ENCODE measurements at regions of chr14 and their contacts with region 1.

Region 1: GRCh38 chr14:67359775-67360648 is at the starts of genes ATP6V1D and EIF2S1:
- DNase-seq: peak; percentile 96
- H3K4me3 ChIP-seq: peak within 1 kb of the TSS; percentile 97
- CTCF ChIP-seq: peak; percentile 79

Region 2: DNA sequence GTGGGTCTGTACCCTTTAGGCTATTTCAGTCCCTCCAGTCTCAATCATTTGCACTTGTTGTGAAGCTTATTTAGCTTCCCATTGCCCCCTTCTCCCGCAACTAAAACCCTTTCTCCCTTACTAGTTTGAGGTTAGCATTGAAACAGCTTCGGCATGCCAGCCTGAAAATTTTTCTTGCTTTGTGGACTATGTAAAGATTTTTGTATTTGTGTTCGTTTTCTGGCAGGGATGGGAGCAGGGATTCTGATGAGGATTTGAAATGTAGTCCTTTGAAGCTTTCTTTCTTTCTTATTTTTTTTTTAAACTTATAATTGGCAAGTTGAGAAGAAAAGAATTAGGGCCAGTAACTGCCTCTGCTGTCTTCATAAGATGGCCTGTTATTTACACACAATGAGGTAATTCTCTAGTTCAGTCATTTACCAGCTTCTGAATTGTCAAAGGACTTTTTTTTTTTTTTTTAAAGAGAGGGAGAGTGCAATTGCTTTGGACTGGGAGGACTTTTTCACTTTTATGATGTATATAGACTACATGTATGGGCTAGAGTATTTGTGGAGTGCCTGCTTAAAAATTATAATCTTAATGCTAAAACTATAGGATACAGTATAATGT is 89.8 kb before region 1 on chr14:
- CTCF ChIA-PET with region 1: no interaction called
- POLR2A ChIA-PET with region 1: no interaction called
- DNase-seq: no peak
- H3K4me3 ChIP-seq: no peak overlapping the region
- CTCF ChIP-seq: no peak

Region 3: GRCh38 chr14:67285876-67286452 is 74.0 kb before region 1 on chr14:
- CTCF ChIA-PET with region 1: interaction called, 10 read pairs
- POLR2A ChIA-PET with region 1: no interaction called
- DNase-seq: no peak
- H3K4me3 ChIP-seq: no peak overlapping the region
- CTCF ChIP-seq: no peak

Region 4: DNA sequence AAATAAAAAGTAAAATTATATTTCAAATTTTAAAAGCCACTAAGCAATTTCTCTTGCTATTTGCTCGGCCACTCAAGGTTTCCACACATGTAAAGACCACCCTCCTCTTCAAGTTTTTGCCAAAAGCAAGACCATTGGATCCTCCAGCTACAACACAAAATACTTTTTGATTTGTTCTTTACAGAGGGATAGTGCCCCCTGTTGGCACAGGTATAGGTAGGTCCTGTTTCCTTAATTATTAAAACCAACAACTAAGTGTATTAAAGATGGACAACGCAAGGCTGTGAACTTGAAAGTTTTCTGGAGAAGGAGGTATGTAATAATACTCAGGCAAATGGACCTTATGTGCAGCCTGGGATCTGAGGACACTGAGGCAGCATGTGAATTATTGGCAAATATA is 24.2 kb before region 1 on chr14:
- CTCF ChIA-PET with region 1: interaction called, 13 read pairs
- POLR2A ChIA-PET with region 1: interaction called, 4 read pairs
- DNase-seq: no peak
- H3K4me3 ChIP-seq: no peak overlapping the region
- CTCF ChIP-seq: no peak

Region 5: DNA sequence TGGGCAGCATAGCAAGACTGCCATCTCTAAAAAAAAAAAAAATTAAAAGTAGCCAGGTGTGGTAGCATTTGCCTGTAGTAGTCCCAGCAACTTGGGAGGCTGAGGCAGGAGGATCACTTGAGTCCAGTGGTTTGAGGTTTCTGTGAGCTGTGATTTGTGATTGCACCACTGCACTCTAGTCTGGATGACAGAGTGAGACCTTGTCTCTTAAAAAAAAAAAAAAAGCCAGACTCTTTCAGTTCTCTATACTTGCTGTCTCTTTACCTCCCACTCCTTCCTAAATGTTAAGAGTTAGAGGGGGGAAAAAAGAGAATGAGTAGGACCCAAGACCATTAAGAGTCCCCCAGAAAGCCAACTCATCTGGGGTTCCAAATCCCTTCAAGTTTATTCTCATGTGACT is 17.9 kb after region 1 on chr14:
- CTCF ChIA-PET with region 1: interaction called, 58 read pairs
- POLR2A ChIA-PET with region 1: no interaction called
- DNase-seq: no peak
- H3K4me3 ChIP-seq: no peak overlapping the region
- CTCF ChIP-seq: no peak

Region 6: GRCh38 chr14:67467179-67468080 is 107.4 kb after region 1 on chr14:
- CTCF ChIA-PET with region 1: no interaction called
- POLR2A ChIA-PET with region 1: no interaction called
- DNase-seq: no peak
- H3K4me3 ChIP-seq: no peak overlapping the region
- CTCF ChIP-seq: no peak

Region 7: GRCh38 chr14:67793863-67794262 is 433.9 kb after region 1 on chr14:
- CTCF ChIA-PET with region 1: no interaction called
- POLR2A ChIA-PET with region 1: no interaction called
- DNase-seq: no peak
- H3K4me3 ChIP-seq: no peak overlapping the region
- CTCF ChIP-seq: no peak

Measured in AG04449 (cell line).